HepG2 (cell line): ENCODE measurements at regions of chr19 and their contacts with region 1.

Region 1: DNA sequence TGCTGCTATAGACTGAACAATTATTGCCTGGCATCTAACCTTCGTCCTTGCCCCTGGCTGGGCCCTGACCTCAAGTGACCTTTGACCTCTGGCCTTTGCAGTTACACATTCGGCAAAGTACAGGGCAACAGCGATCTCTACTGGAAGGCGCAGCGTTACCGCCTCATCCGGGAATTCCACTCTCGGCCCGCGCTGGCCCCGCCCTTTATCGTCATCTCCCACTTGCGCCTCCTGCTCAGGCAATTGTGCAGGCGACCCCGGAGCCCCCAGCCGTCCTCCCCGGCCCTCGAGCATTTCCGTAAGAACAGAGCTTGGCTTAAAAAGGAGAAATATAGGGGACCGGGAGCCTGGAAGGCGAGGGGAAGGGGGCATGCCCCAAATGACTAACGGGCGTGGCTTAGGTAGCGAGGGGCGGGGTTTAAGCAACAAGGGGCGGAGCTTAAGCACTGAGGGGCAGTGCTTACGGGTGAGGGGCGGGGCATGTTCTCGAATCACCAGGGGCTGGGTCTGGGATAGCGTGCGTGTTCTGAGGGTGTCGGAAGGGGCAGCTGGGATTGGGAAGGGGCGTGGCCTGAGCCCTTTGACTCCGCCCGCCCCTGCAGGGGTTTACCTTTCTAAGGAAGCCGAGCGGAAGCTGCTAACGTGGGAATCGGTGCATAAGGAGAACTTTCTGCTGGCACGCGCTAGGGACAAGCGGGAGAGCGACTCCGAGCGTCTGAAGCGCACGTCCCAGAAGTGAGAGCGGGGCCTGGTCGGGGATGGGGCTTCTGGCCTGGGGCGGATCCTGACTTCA is 52.7 kb downstream of the TRPM4 start:
- DNase-seq: no peak
- ATAC-seq: peak; percentile 33; the same call in 2 of the 3 replicates
- H3K4me3 ChIP-seq: no peak overlapping the region
- H3K27ac ChIP-seq: no peak overlapping the region
- H3K4me1 ChIP-seq: peaks cover 17% of the 10 kb centered on the region
- H3K27me3 ChIP-seq: no peaks in the 10 kb centered on the region
- CTCF ChIP-seq: 0 out of 2 replicates have a peak, but pooled peaks have one; percentile 30
- EP300 ChIP-seq: no peak
- POLR2A ChIP-seq: no peak
- RAD21 ChIP-seq: no peak

Region 2: GRCh38 chr19:49097455-49098288 is 112.6 kb before region 1 on chr19:
- CTCF ChIA-PET with region 1: interaction called, 9 read pairs
- POLR2A ChIA-PET with region 1: no interaction called
- in situ Hi-C with region 1: no loop called
- intact Hi-C with region 1: loop called (anchors 1 kb)
- DNase-seq: peak; percentile 55
- ATAC-seq: peak; percentile 73
- H3K4me3 ChIP-seq: no peak overlapping the region
- H3K27ac ChIP-seq: no peak overlapping the region
- H3K4me1 ChIP-seq: no peaks in the 10 kb centered on the region
- H3K27me3 ChIP-seq: no peaks in the 10 kb centered on the region
- CTCF ChIP-seq: peak; percentile 97
- EP300 ChIP-seq: no peak
- POLR2A ChIP-seq: no peak; a peak in 1 of 4 replicates
- RAD21 ChIP-seq: peak; percentile 74

Region 3: DNA sequence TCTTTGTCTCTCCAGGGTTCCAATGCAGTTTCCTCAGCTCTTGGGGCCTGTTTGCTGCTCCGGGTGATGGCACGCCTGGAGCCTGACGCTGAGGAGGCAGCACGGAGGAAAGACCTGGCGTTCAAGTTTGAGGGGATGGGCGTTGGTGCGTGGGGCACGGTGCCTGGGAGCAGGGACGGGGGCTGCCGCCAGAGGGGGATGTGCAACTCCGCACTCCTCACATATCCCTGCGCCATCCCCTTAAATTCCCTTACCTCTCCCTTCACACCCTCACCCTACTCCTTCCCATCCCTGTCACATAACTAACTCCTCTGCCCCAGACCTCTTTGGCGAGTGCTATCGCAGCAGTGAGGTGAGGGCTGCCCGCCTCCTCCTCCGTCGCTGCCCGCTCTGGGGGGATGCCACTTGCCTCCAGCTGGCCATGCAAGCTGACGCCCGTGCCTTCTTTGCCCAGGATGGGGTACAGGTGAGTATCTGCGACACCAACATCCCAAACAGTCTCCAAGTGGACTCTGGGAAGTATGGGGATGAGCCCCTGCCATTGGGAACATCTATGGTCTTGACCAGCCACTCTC is 21.6 kb before region 1 on chr19:
- CTCF ChIA-PET with region 1: no interaction called
- POLR2A ChIA-PET with region 1: no interaction called
- in situ Hi-C with region 1: no loop called
- intact Hi-C with region 1: no loop called
- DNase-seq: no peak
- ATAC-seq: no peak
- H3K4me3 ChIP-seq: no peak overlapping the region
- H3K27ac ChIP-seq: no peak overlapping the region
- H3K4me1 ChIP-seq: peaks cover 21% of the 10 kb centered on the region
- H3K27me3 ChIP-seq: no peaks in the 10 kb centered on the region
- CTCF ChIP-seq: no peak
- EP300 ChIP-seq: no peak
- POLR2A ChIP-seq: no peak
- RAD21 ChIP-seq: no peak